Lower leg skin (tissue), 4 donors: ENCODE measurements at regions of chr11 and their contacts with region 1.

Region 1: DNA sequence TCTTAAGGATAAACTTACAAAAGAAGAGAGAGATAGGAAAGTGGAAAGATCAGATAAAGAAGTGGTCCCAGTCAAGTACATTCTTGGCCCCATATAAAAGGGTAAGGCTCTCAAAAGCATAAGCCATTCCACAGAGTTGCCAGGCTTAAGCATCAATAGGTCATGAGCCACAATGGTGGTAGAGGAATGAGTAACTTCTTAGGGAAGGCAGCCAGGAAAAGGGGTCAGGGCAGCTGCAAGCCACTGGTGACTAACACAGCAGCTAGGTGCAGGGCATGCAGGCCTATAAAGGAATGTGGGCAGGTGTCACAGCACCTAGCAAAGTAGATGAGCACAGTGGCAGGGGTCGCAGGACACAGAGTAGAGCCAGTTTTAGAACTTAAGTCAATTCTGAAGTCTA is 302.6 kb upstream of the FAT3 start:
- DNase-seq: no peak
- H3K4me3 ChIP-seq: no peak overlapping the region
- CTCF ChIP-seq: no peak
- POLR2A ChIP-seq: no peak

Region 2: GRCh38 chr11:90197377-90197776 is 1724.6 kb before region 1 on chr11:
- intact Hi-C with region 1: loop called (anchors 5 kb)
- DNase-seq: no peak
- H3K4me3 ChIP-seq: no peak overlapping the region
- CTCF ChIP-seq: no peak
- POLR2A ChIP-seq: no peak

Region 3: DNA sequence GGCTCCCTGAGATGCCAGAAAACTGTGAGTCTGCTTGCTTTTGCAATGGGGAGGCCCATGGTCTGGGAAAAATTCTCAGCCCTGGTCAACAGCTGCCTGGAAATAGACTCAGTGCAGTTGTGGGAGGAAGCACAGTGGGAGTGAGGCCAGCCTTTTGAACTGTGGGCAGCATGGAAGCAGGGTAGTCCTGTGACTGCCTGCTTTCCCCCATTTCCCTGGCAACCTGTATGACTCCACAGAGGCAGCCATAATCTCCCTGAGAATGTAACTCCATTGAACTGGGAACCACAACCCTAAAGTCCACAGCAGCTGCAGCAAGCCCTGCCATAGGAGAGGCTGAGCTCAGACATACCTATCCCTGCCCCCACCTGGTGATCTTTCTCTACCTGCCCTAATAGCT is 191.9 kb before region 1 on chr11:
- intact Hi-C with region 1: loop called (anchors 5 kb)
- DNase-seq: no peak
- H3K4me3 ChIP-seq: no peak overlapping the region
- CTCF ChIP-seq: no peak
- POLR2A ChIP-seq: no peak

Region 4: DNA sequence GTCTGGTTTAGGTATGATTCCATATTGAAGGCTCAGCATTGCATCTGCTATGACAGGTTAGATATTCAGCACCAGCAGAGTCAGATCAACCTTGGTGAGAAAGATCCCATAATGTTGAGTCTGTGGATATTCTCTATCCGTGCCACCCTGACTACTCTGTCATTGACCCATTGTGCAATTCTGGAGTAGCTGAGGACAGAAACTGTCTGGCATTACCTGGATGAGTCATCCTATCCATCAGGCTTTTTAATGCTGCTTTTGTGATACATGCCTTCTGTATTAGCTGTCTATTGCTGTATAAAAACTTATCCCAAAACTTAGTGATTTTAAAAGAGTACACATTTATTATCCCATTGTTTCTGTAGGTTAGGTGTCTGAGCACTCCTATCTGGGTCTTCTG is 113.5 kb after region 1 on chr11:
- intact Hi-C with region 1: no loop called
- DNase-seq: no peak
- H3K4me3 ChIP-seq: no peak overlapping the region
- CTCF ChIP-seq: no peak
- POLR2A ChIP-seq: no peak

Region 5: DNA sequence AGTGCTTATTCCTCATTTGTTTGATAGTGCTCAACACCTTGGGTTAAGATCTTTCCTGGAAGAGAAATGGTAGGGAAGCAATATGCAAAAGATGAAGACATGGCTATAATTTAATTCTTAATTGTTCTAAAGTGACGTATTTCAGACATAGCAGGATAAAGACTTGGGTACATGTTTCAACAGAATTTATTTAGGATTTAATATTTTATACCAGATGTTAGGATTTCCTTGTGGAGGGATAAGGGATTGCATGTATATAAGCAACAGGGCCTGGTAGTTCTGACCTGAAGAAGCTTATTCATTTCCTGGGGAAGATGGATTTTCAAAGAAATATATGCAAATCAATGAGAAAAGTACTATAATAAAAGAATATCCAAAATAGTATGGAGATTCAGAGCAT is 466.4 kb after region 1 on chr11:
- intact Hi-C with region 1: loop called (anchors 5 kb)
- DNase-seq: no peak
- H3K4me3 ChIP-seq: no peak overlapping the region
- CTCF ChIP-seq: no peak
- POLR2A ChIP-seq: no peak